Mammary epithelial cell (primary cell): ENCODE measurements at regions of chr5 and their contacts with region 1.

Region 1: GRCh38 chr5:167582283-167582682 is 709.2 kb upstream of the WWC1 start:
- DNase-seq: peak; percentile 10
- H3K4me3 ChIP-seq: no peak overlapping the region
- H3K27ac ChIP-seq: no peak overlapping the region
- H3K4me1 ChIP-seq: no peaks in the 10 kb centered on the region
- H3K27me3 ChIP-seq: no peaks in the 10 kb centered on the region
- CTCF ChIP-seq: peak; percentile 29 to 41

Region 2: DNA sequence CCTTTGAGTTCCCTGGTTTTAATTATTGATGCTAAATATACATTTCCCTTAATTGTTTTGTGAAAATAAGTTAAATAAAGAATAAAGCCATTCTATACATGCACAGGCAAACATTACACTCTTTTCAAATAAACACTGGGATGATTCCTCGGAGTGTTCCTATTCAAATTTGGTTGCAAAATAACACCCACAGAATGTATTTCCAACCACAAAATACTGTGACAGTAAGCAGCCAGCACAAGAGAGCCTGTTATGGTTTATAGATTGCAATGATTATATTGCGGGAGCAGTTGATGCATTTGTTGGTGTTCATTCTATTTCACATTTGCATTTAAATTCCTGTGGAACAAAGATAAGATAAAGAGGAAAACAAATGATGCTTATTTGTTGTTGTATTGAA is 76.6 kb after region 1 on chr5:
- CTCF ChIA-PET with region 1: no interaction called
- dilution Hi-C with region 1: no loop called
- in situ Hi-C with region 1: no loop called
- intact Hi-C with region 1: no loop called
- DNase-seq: no peak
- H3K4me3 ChIP-seq: no peak overlapping the region
- H3K27ac ChIP-seq: no peak overlapping the region
- H3K4me1 ChIP-seq: no peaks in the 10 kb centered on the region
- H3K27me3 ChIP-seq: no peaks in the 10 kb centered on the region
- CTCF ChIP-seq: no peak

Region 3: GRCh38 chr5:168020542-168021294 is 438.4 kb after region 1 on chr5:
- CTCF ChIA-PET with region 1: no interaction called
- dilution Hi-C with region 1: no loop called
- in situ Hi-C with region 1: loop called in 1 of 2 experiments (anchors 25 kb)
- intact Hi-C with region 1: loop called (anchors 1 kb)
- DNase-seq: no peak
- H3K4me3 ChIP-seq: no peak overlapping the region
- H3K27ac ChIP-seq: no peak overlapping the region
- H3K4me1 ChIP-seq: no peaks in the 10 kb centered on the region
- H3K27me3 ChIP-seq: no peaks in the 10 kb centered on the region
- CTCF ChIP-seq: peak; percentile 29 to 51